ENCODE measurements at regions of chr18 and their contacts with region 1.

Region 1: GRCh38 chr18:35386600-35387351 is 9.6 kb upstream of the ZNF396 start:
- DNase-seq: peak; percentile 78
- ATAC-seq: peak; percentile 94
- H3K4me3 Mint-ChIP-seq: no peak overlapping the region
- H3K27ac Mint-ChIP-seq: no peak overlapping the region
- H3K4me1 Mint-ChIP-seq: peaks cover 5% of the 10 kb centered on the region
- H3K27me3 Mint-ChIP-seq: peaks cover 29% of the 10 kb centered on the region

Region 2: GRCh38 chr18:35376393-35376741 is 10.4 kb before region 1 on chr18:
- CTCF ChIA-PET with region 1: interaction called, 23 read pairs
- POLR2A ChIA-PET with region 1: no interaction called
- DNase-seq: peak; percentile 36
- ATAC-seq: peak; percentile 65
- H3K4me3 Mint-ChIP-seq: peak overlapping the region; percentile 77
- H3K27ac Mint-ChIP-seq: peak overlapping the region; percentile 28
- H3K4me1 Mint-ChIP-seq: peaks cover 21% of the 10 kb centered on the region
- H3K27me3 Mint-ChIP-seq: peaks cover 17% of the 10 kb centered on the region

Region 3: DNA sequence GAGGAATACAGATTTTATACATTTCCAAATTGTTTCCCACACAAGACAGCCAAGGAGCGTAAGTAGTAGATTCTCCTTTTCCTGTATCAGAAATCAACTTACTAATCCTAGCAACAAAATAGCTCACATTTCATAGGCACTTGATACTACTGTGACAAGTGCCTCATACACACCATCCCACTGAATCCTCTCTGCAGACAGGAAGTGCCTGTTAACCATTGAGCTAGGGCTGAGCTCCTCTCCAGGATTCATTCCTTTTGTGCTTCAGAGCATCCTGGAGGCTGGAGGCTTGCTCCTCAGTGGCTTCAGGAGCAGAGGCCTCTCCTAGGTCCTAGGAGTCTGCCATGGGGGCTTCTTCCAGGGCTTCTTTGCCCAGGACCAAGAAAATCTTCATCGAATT is 11.2 kb after region 1 on chr18:
- CTCF ChIA-PET with region 1: interaction called, 12 read pairs
- POLR2A ChIA-PET with region 1: no interaction called
- DNase-seq: no peak
- ATAC-seq: no peak
- H3K4me3 Mint-ChIP-seq: no peak overlapping the region
- H3K27ac Mint-ChIP-seq: no peak overlapping the region
- H3K4me1 Mint-ChIP-seq: no peaks in the 10 kb centered on the region
- H3K27me3 Mint-ChIP-seq: peaks cover 18% of the 10 kb centered on the region

Region 4: DNA sequence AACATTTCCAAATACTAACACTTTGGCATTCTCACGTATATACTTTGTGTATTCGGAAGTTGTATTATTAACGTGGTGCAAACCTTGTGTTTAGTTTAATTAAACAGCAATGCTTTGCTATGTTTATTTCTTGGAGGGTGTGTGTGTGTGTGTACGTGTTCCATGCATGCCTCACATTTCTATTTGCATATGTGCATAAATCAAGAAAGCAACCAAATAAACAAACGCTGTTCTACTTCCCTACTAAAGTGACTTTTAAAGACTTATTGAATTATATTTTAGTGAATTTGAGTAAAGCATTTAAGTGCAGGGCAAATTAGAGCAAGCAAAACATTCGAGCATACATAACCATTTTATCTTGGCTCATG is 44.6 kb after region 1 on chr18:
- CTCF ChIA-PET with region 1: no interaction called
- POLR2A ChIA-PET with region 1: no interaction called
- DNase-seq: no peak
- ATAC-seq: no peak
- H3K4me3 Mint-ChIP-seq: no peak overlapping the region
- H3K27ac Mint-ChIP-seq: no peak overlapping the region
- H3K4me1 Mint-ChIP-seq: no peaks in the 10 kb centered on the region
- H3K27me3 Mint-ChIP-seq: peaks cover 6% of the 10 kb centered on the region